CD8-positive, alpha-beta T cell (primary cell): ENCODE measurements at regions of chr5 and their contacts with region 1.

Region 1: DNA sequence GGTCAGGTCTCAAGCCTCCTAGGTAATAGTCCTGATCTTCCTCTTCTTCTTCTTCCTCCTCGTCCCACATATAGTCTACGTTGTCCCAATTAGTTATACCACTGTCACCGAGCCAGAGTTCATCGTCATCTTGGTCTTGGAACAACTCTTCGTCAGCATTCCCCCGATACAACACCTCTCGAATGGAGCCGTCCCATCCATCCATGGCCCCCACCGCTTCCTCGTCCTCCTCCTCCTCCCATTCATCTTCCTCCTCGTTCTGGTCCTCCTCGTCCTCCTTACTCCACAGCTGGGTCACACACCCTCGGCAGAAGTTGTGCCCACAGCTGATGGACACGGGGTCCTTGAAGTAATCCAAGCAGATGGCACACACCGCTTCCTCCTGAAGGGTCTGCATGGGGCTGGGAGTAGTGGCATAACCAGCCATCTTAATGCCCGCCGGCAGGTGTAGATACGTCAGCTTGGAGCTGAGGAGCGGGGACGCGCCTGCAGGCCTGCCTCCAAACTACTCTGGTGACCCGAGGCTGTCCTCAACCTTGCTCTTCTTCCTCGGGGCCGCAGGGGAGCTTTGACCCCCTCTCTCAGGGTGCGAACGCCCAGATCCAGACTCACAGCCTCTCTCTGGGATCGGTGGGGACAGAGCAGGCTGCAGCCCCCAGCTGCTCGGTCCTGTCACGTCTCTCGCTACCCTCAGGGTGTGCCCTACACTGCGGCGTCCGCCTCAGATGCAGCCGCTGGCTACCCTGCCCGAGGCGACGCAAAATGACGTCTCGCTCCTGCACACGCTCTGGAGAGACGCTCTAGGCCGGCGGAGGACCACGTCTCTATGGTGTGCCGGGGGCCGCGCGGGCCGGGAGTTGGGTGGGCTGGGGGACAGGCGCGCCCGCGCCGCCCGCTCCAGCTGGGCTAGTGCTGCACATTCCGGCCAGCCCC is at the start of gene TRIM52:
- DNase-seq: peak; percentile 81 to 96 (median 91)
- ATAC-seq: peak; percentile 77
- H3K4me3 ChIP-seq: peak within 1 kb of the TSS; percentile 92 to 99
- H3K4me3 Mint-ChIP-seq: peak within 1 kb of the TSS; percentile 99
- H3K27ac ChIP-seq: peak within 1 kb of the TSS; percentile 97 to 99
- H3K27ac Mint-ChIP-seq: peak within 1 kb of the TSS; percentile 99
- H3K4me1 ChIP-seq: peaks cover 52% of the 10 kb centered on the region
- H3K4me1 Mint-ChIP-seq: peaks cover 53% of the 10 kb centered on the region
- H3K27me3 ChIP-seq: no peaks in the 10 kb centered on the region
- H3K27me3 Mint-ChIP-seq: no peaks in the 10 kb centered on the region
- CTCF ChIP-seq: peak; percentile 28
- total RNA-seq, gene TRIM52: 23.7 to 28.8 TPM

Region 2: GRCh38 chr5:180810210-180810958 is 450.3 kb before region 1 on chr5:
- CTCF ChIA-PET with region 1: no interaction called
- POLR2A ChIA-PET with region 1: interaction called, 3 read pairs
- intact Hi-C with region 1: loop called in 1 of 2 experiments (anchors 1 kb)
- DNase-seq: peak; percentile 91 to 99 (median 97)
- ATAC-seq: peak; percentile 79
- H3K4me3 ChIP-seq: peak overlapping the region; percentile 66 to 96
- H3K4me3 Mint-ChIP-seq: peak overlapping the region; percentile 84
- H3K27ac ChIP-seq: peak overlapping the region; percentile 94 to 98
- H3K27ac Mint-ChIP-seq: peak overlapping the region; percentile 100
- H3K4me1 ChIP-seq: peaks cover 50% of the 10 kb centered on the region
- H3K4me1 Mint-ChIP-seq: peaks cover 72% of the 10 kb centered on the region
- H3K27me3 ChIP-seq: no peaks in the 10 kb centered on the region
- H3K27me3 Mint-ChIP-seq: no peaks in the 10 kb centered on the region
- CTCF ChIP-seq: no peak

Region 3: DNA sequence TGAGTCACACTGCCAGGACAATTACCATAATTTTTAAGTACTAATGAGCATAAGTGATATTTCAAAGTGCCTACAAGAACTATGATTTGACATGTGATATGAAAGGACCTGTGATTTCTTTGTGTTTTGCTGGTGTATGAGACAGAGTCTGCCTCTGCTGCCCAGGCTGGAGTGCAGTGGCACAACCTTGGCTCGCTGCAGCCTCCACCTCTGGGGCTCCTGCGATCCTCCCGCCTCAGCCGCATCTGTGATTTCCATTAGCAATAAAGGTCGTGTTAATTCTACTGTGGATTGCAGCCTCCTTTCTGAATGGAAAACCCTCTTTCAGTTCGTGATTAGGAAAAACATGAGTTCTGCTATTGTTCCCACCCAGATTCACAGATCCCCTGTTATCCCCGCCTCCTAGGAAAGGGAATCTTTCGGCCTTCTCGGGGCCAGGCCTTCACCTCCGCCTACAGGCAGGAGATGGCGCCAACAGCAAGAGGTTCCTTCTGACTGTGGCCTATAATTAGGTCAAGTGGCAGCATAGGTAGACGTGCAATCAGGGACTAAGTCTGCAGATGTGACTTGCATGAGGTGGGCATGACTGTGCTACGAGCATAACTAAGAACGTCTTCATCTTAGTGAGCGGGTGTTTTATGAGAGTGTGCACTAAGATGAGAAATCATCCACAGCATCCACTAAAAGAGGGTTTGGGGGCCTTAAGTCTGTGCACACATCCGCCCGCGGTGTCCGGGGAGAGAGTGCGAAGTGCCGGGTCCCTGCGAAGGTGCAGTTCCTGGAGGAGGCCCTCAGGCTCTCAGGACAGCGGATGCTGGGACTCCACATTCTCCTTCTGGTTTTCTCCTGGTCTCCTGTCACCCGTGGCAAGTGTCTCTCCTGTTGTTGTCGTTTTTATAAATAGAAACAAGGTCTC is 78.7 kb before region 1 on chr5:
- CTCF ChIA-PET with region 1: interaction called, 6 read pairs
- POLR2A ChIA-PET with region 1: interaction called, 24 read pairs
- intact Hi-C with region 1: no loop called
- DNase-seq: peak in 8 of 9 experiments; percentile 49 to 88 (median 73)
- ATAC-seq: peak; percentile 77
- H3K4me3 ChIP-seq: no peak overlapping the region
- H3K4me3 Mint-ChIP-seq: peak overlapping the region; percentile 83
- H3K27ac ChIP-seq: peak overlapping the region in 1 of 2 experiments; percentile 55
- H3K27ac Mint-ChIP-seq: peak overlapping the region; percentile 76
- H3K4me1 ChIP-seq: peaks cover 13% of the 10 kb centered on the region
- H3K4me1 Mint-ChIP-seq: peaks cover 31% of the 10 kb centered on the region
- H3K27me3 ChIP-seq: no peaks in the 10 kb centered on the region
- H3K27me3 Mint-ChIP-seq: peaks cover 2% of the 10 kb centered on the region
- CTCF ChIP-seq: peak; percentile 79

Region 4: DNA sequence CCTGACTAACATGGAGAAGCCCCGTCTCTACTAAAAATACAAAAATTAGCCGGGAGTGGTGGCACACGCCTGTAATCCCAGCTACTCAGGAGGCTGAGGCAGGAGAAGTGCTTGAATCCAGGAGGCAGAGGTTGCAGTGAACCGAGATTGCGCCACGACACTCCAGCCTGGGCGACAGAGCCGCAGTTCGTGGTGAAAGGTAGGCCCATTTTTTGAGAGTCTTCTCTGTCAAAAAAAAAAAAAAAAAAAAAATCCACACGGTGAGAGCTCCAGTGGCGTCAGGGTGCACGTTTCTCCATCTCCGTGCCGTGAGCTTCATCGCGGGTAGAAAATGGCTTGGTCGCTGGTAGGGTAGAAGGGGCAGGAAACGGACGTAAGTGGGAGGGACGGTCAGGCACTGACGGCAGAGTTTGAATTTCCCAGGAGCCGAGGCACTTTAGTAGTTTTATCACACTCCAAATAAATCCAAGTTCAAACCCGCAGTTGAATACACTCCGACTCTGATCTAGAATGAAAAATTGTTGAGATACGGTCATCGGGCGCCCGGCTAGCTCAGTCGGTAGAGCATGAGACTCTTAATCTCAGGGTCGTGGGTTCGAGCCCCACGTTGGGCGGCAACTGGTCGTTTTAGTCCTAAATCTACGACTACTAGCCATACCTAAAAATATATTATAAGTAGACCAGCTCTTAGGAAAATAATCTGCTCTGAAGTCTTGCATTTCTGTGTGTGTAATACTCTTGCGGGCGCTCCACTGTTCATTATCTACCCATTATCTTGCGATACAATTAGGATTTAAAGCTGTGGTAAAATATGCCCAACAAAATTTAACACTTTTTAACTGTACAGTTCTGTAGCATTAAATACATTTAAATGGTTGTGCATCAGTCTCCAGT is 53.2 kb before region 1 on chr5:
- CTCF ChIA-PET with region 1: no interaction called
- POLR2A ChIA-PET with region 1: interaction called, 38 read pairs
- intact Hi-C with region 1: no loop called
- DNase-seq: peak in 8 of 9 experiments; percentile 46 to 92 (median 78)
- ATAC-seq: peak; percentile 69
- H3K4me3 ChIP-seq: peak overlapping the region; percentile 57 to 71
- H3K4me3 Mint-ChIP-seq: peak overlapping the region; percentile 88
- H3K27ac ChIP-seq: peak overlapping the region; percentile 59 to 64
- H3K27ac Mint-ChIP-seq: peak overlapping the region; percentile 85
- H3K4me1 ChIP-seq: peaks cover 29% of the 10 kb centered on the region
- H3K4me1 Mint-ChIP-seq: peaks cover 30% of the 10 kb centered on the region
- H3K27me3 ChIP-seq: no peaks in the 10 kb centered on the region
- H3K27me3 Mint-ChIP-seq: peaks cover 14% of the 10 kb centered on the region
- CTCF ChIP-seq: no peak

Region 5: GRCh38 chr5:181223058-181223728 is 37.5 kb before region 1 on chr5 and contains the start of gene TRIM41:
- CTCF ChIA-PET with region 1: interaction called, 4 read pairs
- POLR2A ChIA-PET with region 1: interaction called, 85 read pairs
- intact Hi-C with region 1: loop called (anchors 1 kb)
- DNase-seq: peak; percentile 93 to 99 (median 98)
- ATAC-seq: peak; percentile 60
- H3K4me3 ChIP-seq: peak within 1 kb of the TSS; percentile 84 to 95
- H3K4me3 Mint-ChIP-seq: peak within 1 kb of the TSS; percentile 94
- H3K27ac ChIP-seq: peak within 1 kb of the TSS; percentile 91 to 100
- H3K27ac Mint-ChIP-seq: peak within 1 kb of the TSS; percentile 98
- H3K4me1 ChIP-seq: peaks cover 37% of the 10 kb centered on the region
- H3K4me1 Mint-ChIP-seq: peaks cover 57% of the 10 kb centered on the region
- H3K27me3 ChIP-seq: no peaks in the 10 kb centered on the region
- H3K27me3 Mint-ChIP-seq: no peaks in the 10 kb centered on the region
- CTCF ChIP-seq: no peak
- total RNA-seq, gene TRIM41: 20.9 to 22.2 TPM